ENCODE measurements at regions of chr18 and their contacts with region 1.

Region 1: DNA sequence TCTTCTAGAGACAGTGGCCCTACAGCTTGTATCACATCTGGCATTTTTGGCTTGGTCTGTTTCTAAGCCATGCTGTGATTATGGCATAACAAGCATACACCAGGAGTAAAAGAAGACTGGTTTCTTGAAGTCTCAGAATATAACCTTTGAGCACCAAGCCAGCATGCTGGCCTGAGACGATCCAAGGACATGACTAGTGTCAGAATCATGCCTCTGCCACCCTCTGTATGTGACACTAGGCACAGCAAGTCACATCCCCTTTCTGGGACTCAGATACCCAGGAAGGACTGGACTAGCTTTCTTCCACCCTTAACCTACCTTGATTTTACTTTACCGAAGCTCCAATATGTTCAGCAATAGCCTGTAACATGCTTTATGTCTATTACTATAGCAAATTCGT is 345.5 kb downstream of the SETBP1 start:
- DNase-seq: no peak
- ATAC-seq: peak; percentile 42; the same call in 1 of the 3 replicates
- H3K4me3 ChIP-seq: no peak overlapping the region
- H3K27ac ChIP-seq: no peak overlapping the region
- H3K4me1 ChIP-seq: no peaks in the 10 kb centered on the region
- H3K27me3 ChIP-seq: no peaks in the 10 kb centered on the region
- CTCF ChIP-seq: peak in 1 of 3 experiments; percentile 15; a peak in 1 of 6 replicates
- EP300 ChIP-seq: no peak
- POLR2A ChIP-seq: no peak
- RAD21 ChIP-seq: peak; percentile 45

Region 2: GRCh38 chr18:45081566-45082181 is 55.5 kb after region 1 on chr18:
- CTCF ChIA-PET with region 1: no interaction called
- POLR2A ChIA-PET with region 1: no interaction called
- RAD21 ChIA-PET with region 1: no interaction called
- SMC1A ChIA-PET with region 1: no interaction called
- in situ Hi-C with region 1: loop called (anchors 10 kb)
- intact Hi-C with region 1: no loop called
- DNase-seq: no peak
- ATAC-seq: no peak
- H3K4me3 ChIP-seq: no peak overlapping the region
- H3K27ac ChIP-seq: no peak overlapping the region
- H3K4me1 ChIP-seq: no peaks in the 10 kb centered on the region
- H3K27me3 ChIP-seq: no peaks in the 10 kb centered on the region
- CTCF ChIP-seq: no peak
- EP300 ChIP-seq: no peak
- POLR2A ChIP-seq: no peak
- RAD21 ChIP-seq: no peak

Measured in GM12878 (cell line).